ENCODE measurements at regions of chr17 and their contacts with region 1.

Region 1: GRCh38 chr17:82236142-82236981 is 7.5 kb downstream of the SLC16A3 start:
- DNase-seq: peak; percentile 57 to 78 (median 67)
- H3K4me3 ChIP-seq: no peak overlapping the region
- H3K4me3 Mint-ChIP-seq: peak overlapping the region in 1 of 7 donors; percentile 48
- H3K27ac ChIP-seq: peak overlapping the region; percentile 75
- H3K27ac Mint-ChIP-seq: peak overlapping the region in 6 of 8 donors; percentile 36 to 89 (median 73)
- H3K4me1 ChIP-seq: peaks cover 49% of the 10 kb centered on the region
- H3K4me1 Mint-ChIP-seq: peaks cover 21 to 59% (median 24%) of the 10 kb centered on the region in 3 donors
- H3K27me3 ChIP-seq: no peaks in the 10 kb centered on the region
- H3K27me3 Mint-ChIP-seq: no peaks in the 10 kb centered on the region

Region 2: GRCh38 chr17:82320956-82321927 is 84.9 kb after region 1 on chr17:
- CTCF ChIA-PET with region 1: interaction called, 24 read pairs
- POLR2A ChIA-PET with region 1: interaction called, 3 read pairs
- DNase-seq: peak; percentile 67 to 88 (median 79)
- H3K4me3 ChIP-seq: peak overlapping the region; percentile 53
- H3K4me3 Mint-ChIP-seq: peak overlapping the region; percentile 61 to 88 (median 77)
- H3K27ac ChIP-seq: peak overlapping the region; percentile 38
- H3K27ac Mint-ChIP-seq: peak overlapping the region; percentile 69 to 98 (median 94)
- H3K4me1 ChIP-seq: peaks cover 24% of the 10 kb centered on the region
- H3K4me1 Mint-ChIP-seq: peaks cover 5 to 31% (median 8%) of the 10 kb centered on the region in 3 donors
- H3K27me3 ChIP-seq: no peaks in the 10 kb centered on the region
- H3K27me3 Mint-ChIP-seq: peaks cover 0 to 3% of the 10 kb centered on the region in 2 donors